ENCODE measurements at regions of chr16 and their contacts with region 1.

Region 1: GRCh38 chr16:68097088-68097487 is 11.9 kb downstream of the NFATC3 start:
- DNase-seq: no peak
- H3K4me3 ChIP-seq: no peak overlapping the region
- H3K27ac ChIP-seq: no peak overlapping the region
- H3K4me1 ChIP-seq: peaks cover 0 to 37% (median 4%) of the 10 kb centered on the region in 4 donors
- H3K27me3 ChIP-seq: no peaks in the 10 kb centered on the region
- CTCF ChIP-seq: no peak
- EP300 ChIP-seq: no peak
- POLR2A ChIP-seq: no peak

Region 2: GRCh38 chr16:66810391-66810790 is 1286.7 kb before region 1 on chr16:
- in situ Hi-C with region 1: no loop called
- intact Hi-C with region 1: no loop called
- DNase-seq: no peak
- H3K4me3 ChIP-seq: no peak overlapping the region
- H3K27ac ChIP-seq: no peak overlapping the region
- H3K4me1 ChIP-seq: no peaks in the 10 kb centered on the region
- H3K27me3 ChIP-seq: no peaks in the 10 kb centered on the region
- CTCF ChIP-seq: no peak
- EP300 ChIP-seq: no peak
- POLR2A ChIP-seq: no peak

Region 3: GRCh38 chr16:68144008-68144407 is 46.9 kb after region 1 on chr16:
- in situ Hi-C with region 1: loop called in 1 of 4 experiments (anchors 5 kb)
- intact Hi-C with region 1: no loop called
- DNase-seq: no peak
- H3K4me3 ChIP-seq: no peak overlapping the region
- H3K27ac ChIP-seq: no peak overlapping the region
- H3K4me1 ChIP-seq: peaks cover 0 to 36% (median 18%) of the 10 kb centered on the region in 4 donors
- H3K27me3 ChIP-seq: no peaks in the 10 kb centered on the region
- CTCF ChIP-seq: no peak
- EP300 ChIP-seq: no peak
- POLR2A ChIP-seq: no peak